Panc1 (cell line): ENCODE measurements at regions of chr15 and their contacts with region 1.

Region 1: DNA sequence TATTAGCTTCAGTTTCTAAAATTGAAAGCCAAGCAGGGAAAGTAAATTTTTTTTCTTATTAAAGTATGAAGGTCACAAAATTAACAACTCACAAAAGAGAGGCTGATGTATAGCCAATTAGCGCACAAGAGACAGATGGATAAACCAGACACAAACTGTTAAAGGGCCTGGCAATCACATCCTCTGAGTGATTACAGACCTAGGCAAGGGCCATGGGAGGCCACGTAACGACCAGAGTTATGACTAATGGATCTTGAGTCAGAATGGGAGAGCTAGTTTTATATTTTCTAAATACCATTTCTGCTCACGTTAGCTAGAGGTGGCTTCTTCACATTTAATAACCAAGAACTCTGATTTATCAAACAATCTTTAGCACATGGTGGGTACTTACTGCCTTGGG is 17.8 kb upstream of the SCAMP5 start:
- DNase-seq: no peak
- ATAC-seq: no peak
- H3K4me3 ChIP-seq: no peak overlapping the region
- H3K27ac ChIP-seq: no peak overlapping the region
- H3K4me1 ChIP-seq: no peaks in the 10 kb centered on the region
- H3K27me3 ChIP-seq: no peaks in the 10 kb centered on the region
- CTCF ChIP-seq: no peak

Region 2: DNA sequence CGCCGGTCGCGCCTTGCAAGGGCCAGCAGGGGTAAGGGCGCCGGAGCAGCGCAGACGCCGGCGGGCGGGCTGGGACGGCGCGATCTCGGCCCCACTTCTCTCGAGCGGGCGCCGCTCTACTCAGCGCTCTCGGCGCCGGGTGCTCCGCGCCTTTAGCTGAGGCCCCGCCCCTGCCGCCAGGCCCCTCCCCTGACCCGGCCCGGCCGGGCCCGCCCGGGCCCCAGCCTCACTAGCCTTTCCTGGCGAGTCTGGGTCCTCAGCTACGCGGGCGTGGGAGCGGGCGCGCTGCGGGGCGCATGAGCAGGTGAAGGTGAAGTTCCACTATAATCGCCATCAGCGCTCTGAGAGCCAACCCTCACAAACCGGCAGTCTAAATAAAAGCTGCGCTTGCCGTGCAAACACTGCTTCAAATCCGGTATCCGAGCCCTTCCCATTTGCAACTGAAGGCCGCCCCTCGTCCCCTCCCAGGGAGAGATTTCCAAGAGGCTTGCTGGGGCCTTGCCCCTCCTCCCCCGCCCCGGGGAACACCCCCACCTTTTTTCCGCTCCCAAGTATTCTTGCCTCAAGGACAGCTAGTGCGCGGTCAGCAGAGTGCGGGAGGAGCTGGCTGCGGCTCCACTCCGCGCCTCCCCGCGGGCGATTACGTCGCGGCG is 20.8 kb before region 1 on chr15 and contains the start of gene RPP25:
- CTCF ChIA-PET with region 1: no interaction called
- POLR2A ChIA-PET with region 1: interaction called, 10 read pairs
- in situ Hi-C with region 1: no loop called
- intact Hi-C with region 1: no loop called
- DNase-seq: peak; percentile 80
- ATAC-seq: peak; percentile 90
- H3K4me3 ChIP-seq: peak within 1 kb of the TSS; percentile 79 to 96
- H3K27ac ChIP-seq: peak within 1 kb of the TSS; percentile 96
- H3K4me1 ChIP-seq: peaks cover 36% of the 10 kb centered on the region
- H3K27me3 ChIP-seq: no peaks in the 10 kb centered on the region
- CTCF ChIP-seq: no peak
- total RNA-seq, gene RPP25: 40.1 TPM

Region 3: DNA sequence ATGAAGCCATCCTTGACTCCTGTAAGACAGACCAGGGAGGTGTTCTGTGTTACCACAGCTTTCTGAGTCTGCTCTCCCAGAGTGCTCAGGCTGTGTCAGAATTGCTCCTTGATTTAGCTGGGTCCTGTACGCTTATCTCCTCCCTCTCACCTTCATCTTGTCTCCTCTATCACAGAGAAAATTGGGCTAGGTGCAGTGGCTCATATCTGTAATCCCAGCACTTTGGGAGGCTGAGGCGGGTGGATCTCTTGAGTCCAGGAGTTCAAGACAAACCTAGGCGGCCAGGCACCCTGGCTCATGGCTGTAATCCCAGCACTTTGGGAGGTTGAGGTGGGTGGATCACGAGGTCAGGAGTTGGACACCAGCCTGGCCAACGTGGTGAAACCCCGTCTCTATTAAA is 23.7 kb after region 1 on chr15:
- CTCF ChIA-PET with region 1: interaction called, 10 read pairs
- POLR2A ChIA-PET with region 1: interaction called, 9 read pairs
- in situ Hi-C with region 1: no loop called
- intact Hi-C with region 1: no loop called
- DNase-seq: no peak
- ATAC-seq: no peak
- H3K4me3 ChIP-seq: no peak overlapping the region
- H3K27ac ChIP-seq: no peak overlapping the region
- H3K4me1 ChIP-seq: no peaks in the 10 kb centered on the region; the same call in 1 of the 2 replicates
- H3K27me3 ChIP-seq: no peaks in the 10 kb centered on the region
- CTCF ChIP-seq: no peak

Region 4: DNA sequence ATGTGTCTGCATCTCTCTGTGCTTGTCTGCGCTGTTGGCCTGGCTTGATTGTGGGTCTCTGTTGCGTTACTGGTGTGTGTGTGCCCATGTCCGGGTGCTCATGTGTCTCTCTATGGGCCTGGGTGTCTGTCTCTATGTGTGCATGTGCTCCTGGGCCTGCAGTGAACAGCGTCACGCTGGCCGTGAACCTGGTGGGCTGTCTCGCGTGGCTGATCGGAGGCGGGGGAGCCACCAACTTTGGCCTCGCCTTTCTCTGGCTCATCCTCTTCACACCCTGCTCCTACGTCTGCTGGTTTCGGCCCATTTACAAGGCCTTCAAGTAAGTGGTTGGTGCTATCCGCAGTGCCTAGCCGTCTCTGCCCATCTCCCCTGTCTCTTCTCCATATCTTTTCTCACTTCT is 38.8 kb after region 1 on chr15:
- CTCF ChIA-PET with region 1: no interaction called
- POLR2A ChIA-PET with region 1: no interaction called
- in situ Hi-C with region 1: no loop called
- intact Hi-C with region 1: no loop called
- DNase-seq: no peak
- ATAC-seq: no peak
- H3K4me3 ChIP-seq: no peak overlapping the region
- H3K27ac ChIP-seq: no peak overlapping the region
- H3K4me1 ChIP-seq: no peaks in the 10 kb centered on the region
- H3K27me3 ChIP-seq: no peaks in the 10 kb centered on the region
- CTCF ChIP-seq: no peak

Region 5: DNA sequence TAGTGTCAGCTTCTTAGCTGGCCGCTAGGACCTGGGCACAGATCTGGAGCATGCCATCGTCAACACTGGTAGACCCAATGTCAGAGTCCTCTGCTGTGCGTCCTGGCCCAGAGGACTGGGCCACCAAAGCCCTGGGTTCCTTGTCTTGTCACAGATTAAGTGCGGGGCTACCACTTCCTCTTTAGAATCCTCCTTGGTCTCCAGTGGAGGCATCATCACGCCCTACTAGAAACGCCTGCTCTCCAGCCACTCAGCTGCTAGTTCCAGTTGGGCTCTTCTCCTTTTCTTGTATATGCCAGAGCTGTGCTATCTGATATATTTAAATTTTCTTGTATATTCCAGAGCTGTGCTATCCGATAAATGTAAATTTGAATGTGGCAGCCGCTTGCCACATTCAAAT is 57.0 kb after region 1 on chr15:
- CTCF ChIA-PET with region 1: no interaction called
- POLR2A ChIA-PET with region 1: interaction called, 11 read pairs
- in situ Hi-C with region 1: no loop called
- intact Hi-C with region 1: no loop called
- DNase-seq: no peak
- ATAC-seq: no peak
- H3K4me3 ChIP-seq: no peak overlapping the region
- H3K27ac ChIP-seq: no peak overlapping the region
- H3K4me1 ChIP-seq: peaks cover 3% of the 10 kb centered on the region; the same call in 1 of the 2 replicates
- H3K27me3 ChIP-seq: no peaks in the 10 kb centered on the region
- CTCF ChIP-seq: no peak